HepG2 (cell line): ENCODE measurements at regions of chr1 and their contacts with region 1.

Region 1: DNA sequence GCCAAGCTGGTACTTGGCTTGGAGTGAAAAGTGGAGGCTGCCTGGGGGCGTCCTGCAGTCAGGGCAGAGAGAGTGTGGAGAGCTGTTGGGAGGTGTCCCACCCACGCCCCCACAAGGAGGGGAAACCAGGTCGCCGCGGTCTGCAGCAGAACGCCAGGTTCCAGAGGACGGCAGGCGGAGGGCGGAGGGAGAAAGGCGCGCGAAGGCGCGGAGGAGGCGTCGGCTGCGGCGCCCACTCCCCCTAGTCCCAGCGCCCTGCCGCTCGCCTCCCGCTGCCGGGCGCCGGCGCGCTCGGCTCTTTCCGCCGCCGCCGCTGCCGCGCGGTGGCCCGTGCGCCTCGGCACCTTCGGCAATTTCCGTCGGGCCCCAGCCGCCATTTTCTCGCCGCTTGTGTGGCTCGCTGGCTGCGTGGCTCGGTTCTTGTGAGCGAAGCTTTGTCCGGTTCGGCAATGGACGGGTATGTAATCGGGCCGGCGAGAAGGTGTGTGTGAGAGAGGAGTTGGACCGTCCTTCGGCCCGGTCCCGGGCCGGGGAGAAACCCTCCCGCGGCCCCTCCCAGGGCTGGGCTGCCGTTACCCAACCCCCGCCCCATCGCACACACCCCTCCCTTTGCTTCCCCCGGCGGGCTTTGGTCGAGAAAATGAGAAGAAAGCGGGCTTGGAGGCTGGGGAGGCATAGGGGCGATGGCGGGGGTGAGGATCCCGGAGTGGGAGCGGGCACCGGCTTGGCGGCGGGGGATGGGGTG is at the start of gene PTBP2:
- DNase-seq: peak; percentile 55
- ATAC-seq: peak; percentile 99
- H3K4me3 ChIP-seq: peak within 1 kb of the TSS; percentile 89 to 94 (median 93)
- H3K27ac ChIP-seq: peak within 1 kb of the TSS; percentile 86
- H3K4me1 ChIP-seq: peaks cover 29% of the 10 kb centered on the region
- H3K27me3 ChIP-seq: no peaks in the 10 kb centered on the region
- CTCF ChIP-seq: 0 out of 2 replicates have a peak, but pooled peaks have one; percentile 23
- EP300 ChIP-seq: no peak
- POLR2A ChIP-seq: peak; percentile 42 to 64; a peak in 2 of 4 replicates
- RAD21 ChIP-seq: peak; percentile 23; the same call in 1 of the 2 replicates
- total RNA-seq, gene PTBP2: 9.9 and 14.1 TPM in 2 replicates

Region 2: GRCh38 chr1:95984798-95985374 is 736.7 kb before region 1 on chr1:
- CTCF ChIA-PET with region 1: no interaction called
- POLR2A ChIA-PET with region 1: no interaction called
- in situ Hi-C with region 1: no loop called
- intact Hi-C with region 1: no loop called
- DNase-seq: no peak
- ATAC-seq: no peak
- H3K4me3 ChIP-seq: no peak overlapping the region
- H3K27ac ChIP-seq: no peak overlapping the region
- H3K4me1 ChIP-seq: no peaks in the 10 kb centered on the region
- H3K27me3 ChIP-seq: no peaks in the 10 kb centered on the region
- CTCF ChIP-seq: no peak
- EP300 ChIP-seq: no peak
- POLR2A ChIP-seq: no peak
- RAD21 ChIP-seq: no peak

Region 3: DNA sequence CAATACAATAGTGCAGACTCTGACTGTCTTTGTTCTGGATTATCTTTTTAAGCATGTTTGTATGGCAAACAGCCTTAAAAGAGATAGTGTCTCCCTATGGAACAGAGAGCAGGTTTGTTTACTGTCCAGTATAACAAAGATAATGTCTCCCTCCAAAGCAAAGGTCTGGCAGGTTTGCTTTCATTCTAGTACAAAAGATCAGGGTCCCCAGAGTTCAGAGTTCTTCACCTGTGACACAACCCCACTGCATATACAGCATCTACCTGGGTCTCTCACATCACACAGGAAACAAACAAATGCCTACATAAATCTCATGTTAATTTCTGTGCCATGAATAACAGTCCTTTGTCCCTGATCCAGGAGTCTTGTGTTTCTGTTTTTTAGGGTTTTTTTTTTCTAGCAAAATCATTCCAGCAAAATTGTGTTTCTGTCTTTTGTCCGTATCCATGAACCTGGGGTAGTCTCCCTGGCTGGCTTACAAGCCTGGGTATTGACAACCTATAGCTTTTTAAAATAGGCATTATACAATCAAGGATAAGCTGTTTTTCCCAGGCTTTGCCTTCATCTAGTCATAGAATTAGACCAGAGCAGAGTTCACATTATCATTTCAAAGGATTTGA is 89.4 kb before region 1 on chr1:
- CTCF ChIA-PET with region 1: no interaction called
- POLR2A ChIA-PET with region 1: no interaction called
- in situ Hi-C with region 1: no loop called
- intact Hi-C with region 1: loop called (anchors 1 kb)
- DNase-seq: peak; percentile 98
- ATAC-seq: peak; percentile 98
- H3K4me3 ChIP-seq: peak overlapping the region in 2 of 3 experiments; percentile 6 to 13; a peak in 2 of 6 replicates
- H3K27ac ChIP-seq: peak overlapping the region; percentile 88
- H3K4me1 ChIP-seq: peaks cover 47% of the 10 kb centered on the region
- H3K27me3 ChIP-seq: no peaks in the 10 kb centered on the region
- CTCF ChIP-seq: no peak
- EP300 ChIP-seq: peak; percentile 85 to 98
- POLR2A ChIP-seq: no peak
- RAD21 ChIP-seq: no peak

Region 4: GRCh38 chr1:96756789-96757188 is 35.2 kb after region 1 on chr1:
- CTCF ChIA-PET with region 1: no interaction called
- POLR2A ChIA-PET with region 1: no interaction called
- in situ Hi-C with region 1: no loop called
- intact Hi-C with region 1: no loop called
- DNase-seq: peak; percentile 9
- ATAC-seq: peak; percentile 64; the same call in 2 of the 3 replicates
- H3K4me3 ChIP-seq: no peak overlapping the region
- H3K27ac ChIP-seq: no peak overlapping the region
- H3K4me1 ChIP-seq: no peaks in the 10 kb centered on the region
- H3K27me3 ChIP-seq: no peaks in the 10 kb centered on the region
- CTCF ChIP-seq: peak; percentile 25
- EP300 ChIP-seq: no peak
- POLR2A ChIP-seq: no peak
- RAD21 ChIP-seq: peak; percentile 19; the same call in 1 of the 2 replicates

Region 5: DNA sequence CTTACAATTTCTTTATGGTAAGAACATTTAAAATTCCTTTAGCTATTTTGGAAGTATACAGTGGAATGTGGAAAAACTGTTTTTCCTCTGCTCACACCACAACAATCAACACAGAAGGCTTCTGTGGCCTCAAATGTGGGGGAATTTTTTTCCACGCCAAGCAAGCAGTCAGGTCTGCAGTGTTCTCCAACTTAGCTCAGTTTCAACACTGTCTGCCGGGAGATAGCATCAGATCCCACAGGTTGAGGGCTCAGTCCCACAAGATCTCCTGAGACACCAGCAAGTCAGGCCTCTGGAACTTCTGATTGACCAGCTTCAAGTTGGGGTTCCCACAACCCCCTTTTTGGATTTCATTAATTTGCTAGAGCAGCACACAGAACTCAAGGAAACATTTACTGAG is 50.3 kb after region 1 on chr1:
- CTCF ChIA-PET with region 1: no interaction called
- POLR2A ChIA-PET with region 1: no interaction called
- in situ Hi-C with region 1: no loop called
- intact Hi-C with region 1: loop called (anchors 10 kb)
- DNase-seq: no peak
- ATAC-seq: peak; percentile 63
- H3K4me3 ChIP-seq: peak overlapping the region in 1 of 3 experiments; percentile 6; a peak in 1 of 6 replicates
- H3K27ac ChIP-seq: peak overlapping the region; percentile 78
- H3K4me1 ChIP-seq: peaks cover 24% of the 10 kb centered on the region
- H3K27me3 ChIP-seq: no peaks in the 10 kb centered on the region
- CTCF ChIP-seq: no peak
- EP300 ChIP-seq: no peak
- POLR2A ChIP-seq: no peak
- RAD21 ChIP-seq: no peak

Region 6: DNA sequence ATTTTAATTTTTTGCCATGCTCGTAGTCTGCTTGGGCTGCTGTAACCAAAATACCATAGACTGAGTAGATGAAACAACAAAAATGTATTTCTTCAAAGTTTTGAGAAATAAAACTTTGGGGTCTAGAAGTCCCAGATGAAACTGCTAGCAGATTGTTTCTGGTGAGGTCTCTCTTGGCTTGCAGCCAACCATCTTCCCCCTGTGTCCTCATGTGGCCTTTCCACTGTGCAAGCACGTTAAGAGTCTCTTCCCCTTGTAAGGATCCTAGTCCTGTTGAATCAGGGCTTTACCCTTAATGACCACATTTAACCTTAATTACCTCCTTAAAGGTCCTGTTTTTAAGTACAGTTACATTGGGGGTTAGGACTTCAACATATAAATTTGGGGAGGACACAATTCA is 86.6 kb after region 1 on chr1:
- CTCF ChIA-PET with region 1: no interaction called
- POLR2A ChIA-PET with region 1: no interaction called
- in situ Hi-C with region 1: loop called (anchors 5 kb)
- intact Hi-C with region 1: no loop called
- DNase-seq: no peak
- ATAC-seq: no peak
- H3K4me3 ChIP-seq: no peak overlapping the region
- H3K27ac ChIP-seq: no peak overlapping the region
- H3K4me1 ChIP-seq: peaks cover 12% of the 10 kb centered on the region
- H3K27me3 ChIP-seq: no peaks in the 10 kb centered on the region
- CTCF ChIP-seq: no peak
- EP300 ChIP-seq: no peak
- POLR2A ChIP-seq: no peak
- RAD21 ChIP-seq: no peak

Region 7: GRCh38 chr1:96825231-96825630 is 103.6 kb after region 1 on chr1:
- CTCF ChIA-PET with region 1: no interaction called
- POLR2A ChIA-PET with region 1: no interaction called
- in situ Hi-C with region 1: no loop called
- intact Hi-C with region 1: no loop called
- DNase-seq: no peak
- ATAC-seq: no peak
- H3K4me3 ChIP-seq: no peak overlapping the region
- H3K27ac ChIP-seq: no peak overlapping the region
- H3K4me1 ChIP-seq: no peaks in the 10 kb centered on the region
- H3K27me3 ChIP-seq: no peaks in the 10 kb centered on the region
- CTCF ChIP-seq: no peak
- EP300 ChIP-seq: no peak
- POLR2A ChIP-seq: no peak
- RAD21 ChIP-seq: no peak